BJ (cell line): ENCODE measurements at regions of chr5 and their contacts with region 1.

Region 1: DNA sequence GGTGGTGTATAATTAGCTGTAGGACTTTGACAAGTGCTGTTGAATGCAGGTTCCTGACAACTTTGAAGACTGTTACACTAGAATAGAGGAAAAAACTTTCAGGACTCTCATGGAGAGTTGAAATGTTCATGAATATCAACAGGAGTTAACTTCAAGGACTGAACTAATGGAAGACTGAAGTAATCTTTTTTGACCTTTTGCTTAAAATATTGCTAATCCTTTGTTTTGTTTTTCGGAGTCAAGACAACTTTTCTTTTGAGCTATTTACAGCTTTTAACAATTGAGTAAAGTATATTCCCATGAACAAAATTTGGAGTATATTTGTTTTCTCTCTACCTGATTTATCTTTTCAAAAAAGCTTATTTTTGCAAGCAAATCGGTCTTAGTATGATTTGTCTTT is 34.1 kb upstream of the MTMR12 start:
- DNase-seq: no peak
- H3K4me3 ChIP-seq: no peak overlapping the region
- H3K27me3 ChIP-seq: no peaks in the 10 kb centered on the region
- CTCF ChIP-seq: no peak

Region 2: DNA sequence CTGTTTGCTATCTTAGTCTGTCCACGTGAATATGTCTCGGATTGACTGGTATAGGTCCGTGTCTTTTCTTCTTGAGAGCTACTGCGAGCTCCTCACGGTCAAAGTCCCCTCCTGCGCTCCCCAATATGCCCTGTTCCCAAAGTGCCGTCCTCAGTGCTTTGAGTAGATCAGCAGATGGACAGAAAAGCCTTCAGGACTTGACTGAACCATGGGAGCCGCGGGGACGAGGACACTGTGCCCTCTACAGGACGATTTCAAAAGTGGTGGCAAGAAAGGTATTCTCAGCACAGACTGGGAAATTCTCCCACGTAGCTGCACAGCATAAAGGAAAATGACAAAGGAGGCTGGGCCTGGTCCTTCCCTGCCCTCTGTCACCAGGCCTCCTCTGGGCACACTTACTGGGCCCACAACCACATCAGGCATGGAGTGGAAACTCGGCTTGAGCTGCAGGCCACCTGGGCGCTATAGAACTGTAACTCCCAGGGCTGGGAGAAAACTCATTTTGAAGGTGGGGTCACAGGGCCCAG is 17.5 kb before region 1 on chr5:
- CTCF ChIA-PET with region 1: interaction called, 10 read pairs
- POLR2A ChIA-PET with region 1: no interaction called
- DNase-seq: no peak
- H3K4me3 ChIP-seq: no peak overlapping the region
- H3K27me3 ChIP-seq: no peaks in the 10 kb centered on the region
- CTCF ChIP-seq: peak; percentile 80